MCF 10A (cell line): ENCODE measurements at regions of chr1 and their contacts with region 1.

Region 1: DNA sequence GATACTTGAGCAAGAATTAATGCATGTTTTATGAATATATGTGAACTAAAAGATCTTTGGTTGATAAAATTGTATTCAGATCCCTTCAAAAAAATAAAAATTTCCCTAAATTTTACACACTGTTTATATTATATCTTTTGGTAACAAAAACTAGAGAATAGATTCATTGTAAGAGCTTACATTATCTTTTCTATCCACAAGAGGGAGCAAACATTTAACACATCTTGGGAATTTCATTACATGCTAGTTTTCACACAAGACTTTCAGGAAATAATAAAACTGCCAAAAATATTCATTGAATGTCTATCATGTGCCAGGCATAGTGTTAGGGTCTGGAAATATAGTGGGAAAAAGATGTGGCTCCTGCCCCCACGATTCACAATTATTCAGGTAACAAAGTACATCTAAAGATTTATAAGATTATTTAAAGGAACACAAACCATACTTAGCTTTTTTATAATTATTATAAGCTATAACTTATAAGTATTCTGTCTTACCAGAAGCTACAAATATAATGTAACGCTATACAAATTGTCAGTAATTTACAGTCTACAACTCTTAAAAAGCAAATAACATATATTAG is 30.6 kb downstream of the FAF1 start:
- DNase-seq: peak; percentile 37
- H3K4me3 Mint-ChIP-seq: no peak overlapping the region
- H3K27ac Mint-ChIP-seq: no peak overlapping the region
- H3K4me1 Mint-ChIP-seq: no peaks in the 10 kb centered on the region
- H3K27me3 Mint-ChIP-seq: no peaks in the 10 kb centered on the region
- CTCF ChIP-seq: peak; percentile 40

Region 2: DNA sequence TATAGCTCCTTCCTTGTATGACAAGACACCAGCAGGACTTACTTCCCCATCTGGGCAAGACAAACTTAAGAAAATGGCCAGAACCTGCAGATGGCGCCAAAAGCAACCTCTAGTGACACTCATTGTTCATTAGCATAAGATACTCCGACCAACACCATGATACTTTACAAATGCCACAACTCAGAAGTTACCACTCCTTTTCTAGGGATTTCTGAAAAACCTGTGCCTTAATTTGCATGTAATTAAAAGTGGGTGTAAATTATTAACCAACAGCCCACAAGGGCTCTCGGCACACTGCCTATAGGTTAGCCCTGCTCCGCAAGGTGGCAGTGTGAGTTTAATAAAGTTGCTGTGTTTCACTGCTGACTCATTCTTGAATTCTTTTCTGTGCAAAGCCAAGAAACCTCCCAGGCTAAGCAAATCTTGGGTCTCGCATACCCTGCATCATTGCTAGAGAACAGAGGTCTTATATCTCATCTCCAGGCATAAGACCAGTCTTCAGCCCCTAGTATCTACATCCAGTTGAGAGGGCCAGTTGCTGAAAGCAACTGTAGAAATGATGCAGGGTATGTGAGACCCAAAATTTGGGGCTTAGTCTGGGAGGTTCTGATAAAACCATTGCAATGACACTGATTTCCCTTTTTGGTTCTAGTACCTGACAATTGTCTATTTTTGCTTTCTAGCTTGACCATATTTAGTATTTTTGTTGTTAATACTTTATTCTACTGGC is 55.8 kb before region 1 on chr1:
- CTCF ChIA-PET with region 1: interaction called, 12 read pairs
- POLR2A ChIA-PET with region 1: no interaction called
- intact Hi-C with region 1: no loop called
- DNase-seq: peak; percentile 84
- H3K4me3 Mint-ChIP-seq: peak overlapping the region; percentile 67
- H3K27ac Mint-ChIP-seq: peak overlapping the region; percentile 27
- H3K4me1 Mint-ChIP-seq: no peaks in the 10 kb centered on the region
- H3K27me3 Mint-ChIP-seq: no peaks in the 10 kb centered on the region
- CTCF ChIP-seq: peak; percentile 78

Region 3: DNA sequence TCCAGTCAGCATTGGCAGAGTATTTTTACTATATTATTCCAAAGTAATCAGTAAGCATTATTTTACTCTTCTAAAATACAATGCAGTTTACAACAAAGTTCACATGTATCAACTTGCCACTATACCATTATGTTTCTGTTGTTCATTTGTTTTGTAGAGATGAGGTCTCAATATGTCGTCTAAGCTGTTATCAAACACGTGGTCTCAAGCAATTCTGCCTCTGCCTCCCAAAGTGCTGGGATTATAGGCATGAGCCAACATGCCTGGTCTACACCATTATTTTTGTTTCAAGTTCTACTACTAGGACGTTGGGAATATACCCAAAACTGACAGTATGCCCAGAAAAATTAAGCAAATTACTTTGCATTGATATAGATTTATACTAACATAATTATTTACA is 10.8 kb after region 1 on chr1:
- CTCF ChIA-PET with region 1: interaction called, 23 read pairs
- POLR2A ChIA-PET with region 1: no interaction called
- intact Hi-C with region 1: no loop called
- DNase-seq: no peak
- H3K4me3 Mint-ChIP-seq: no peak overlapping the region
- H3K27ac Mint-ChIP-seq: no peak overlapping the region
- H3K4me1 Mint-ChIP-seq: peaks cover 11% of the 10 kb centered on the region
- H3K27me3 Mint-ChIP-seq: no peaks in the 10 kb centered on the region
- CTCF ChIP-seq: no peak

Region 4: DNA sequence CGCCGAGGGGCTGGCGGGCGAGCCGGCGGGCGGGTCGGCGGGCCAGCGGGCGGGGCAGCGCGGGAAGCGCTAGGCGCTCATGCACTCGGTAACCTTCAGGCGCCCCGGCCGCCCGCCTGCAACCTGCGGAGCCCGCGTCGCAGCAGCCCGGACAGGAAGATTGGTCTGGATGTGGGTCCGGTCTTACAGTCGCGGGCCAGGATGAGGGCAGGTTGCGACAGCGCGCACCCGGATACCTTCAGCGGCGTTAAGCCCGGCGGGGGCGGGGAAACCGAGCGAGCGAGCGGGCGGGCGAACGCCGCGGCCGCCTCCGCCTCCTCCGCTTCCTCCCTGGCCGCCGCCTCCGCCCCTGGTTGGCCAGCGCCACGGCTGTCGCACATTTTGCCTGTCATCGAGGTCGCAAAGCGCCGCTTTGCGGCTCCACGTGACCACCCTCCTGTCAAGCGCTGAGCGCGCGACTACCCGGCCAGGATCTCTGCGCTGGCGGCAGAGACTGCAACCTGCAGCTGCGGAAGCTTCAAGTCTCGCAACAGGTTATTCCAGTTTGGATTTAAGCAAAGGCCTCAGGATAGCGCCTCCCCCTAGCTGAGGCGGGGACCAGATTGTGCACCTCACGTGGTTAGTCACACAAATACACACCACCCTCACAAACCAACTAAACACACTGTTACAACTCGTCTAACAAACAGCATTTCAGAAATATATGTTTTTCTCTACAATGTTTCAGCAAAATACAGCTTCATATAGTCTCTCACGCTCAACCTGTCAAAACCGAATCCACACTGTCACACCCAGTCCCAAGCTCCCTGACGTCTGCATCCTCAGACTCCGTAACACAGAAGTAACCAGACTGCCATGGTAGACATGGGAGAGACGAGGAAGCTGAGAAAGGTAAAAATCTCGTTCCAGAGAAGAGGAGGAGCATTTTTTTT is 30.7 kb after region 1 on chr1 and contains the start of gene FAF1:
- CTCF ChIA-PET with region 1: interaction called, 22 read pairs
- POLR2A ChIA-PET with region 1: interaction called, 5 read pairs
- intact Hi-C with region 1: loop called (anchors 5 kb)
- DNase-seq: peak; percentile 96
- H3K4me3 Mint-ChIP-seq: peak within 1 kb of the TSS; percentile 76
- H3K27ac Mint-ChIP-seq: peak within 1 kb of the TSS; percentile 1
- H3K4me1 Mint-ChIP-seq: peaks cover 11% of the 10 kb centered on the region
- H3K27me3 Mint-ChIP-seq: no peaks in the 10 kb centered on the region
- CTCF ChIP-seq: no peak
- total RNA-seq, gene FAF1: 74.4 and 93.2 TPM in 2 replicates

Region 5: DNA sequence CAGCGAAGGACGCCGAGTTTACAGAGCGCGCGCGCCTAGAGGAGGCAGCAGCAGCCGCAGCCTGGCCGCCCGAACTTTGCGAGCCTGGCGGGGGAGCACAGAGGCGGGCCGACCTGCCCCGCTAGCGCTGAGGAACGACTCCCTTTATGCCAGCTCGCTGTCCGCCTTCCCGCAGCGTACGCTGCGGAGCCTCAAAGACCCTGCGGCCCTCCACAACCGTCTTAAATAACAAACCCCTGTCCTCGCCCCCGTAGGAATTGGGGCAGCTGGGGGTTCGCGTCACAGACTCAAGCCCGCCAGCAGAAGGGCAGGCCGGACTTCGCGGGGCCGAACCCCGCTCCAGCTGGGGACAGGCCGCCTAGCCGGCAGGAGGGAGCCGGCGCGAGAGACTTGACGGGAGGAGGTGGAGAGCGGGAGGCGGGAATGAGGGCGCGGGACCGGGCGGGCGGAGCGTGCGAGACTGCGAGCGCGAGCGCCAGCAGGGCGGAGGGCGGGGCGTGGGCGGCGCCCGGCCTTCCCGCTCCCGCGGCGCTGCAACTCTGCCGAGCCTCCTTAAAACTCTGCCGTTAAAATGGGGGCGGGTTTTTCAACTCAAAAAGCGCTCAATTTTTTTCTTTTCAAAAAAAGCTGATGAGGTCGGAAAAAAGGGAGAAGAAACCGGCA is 38.8 kb after region 1 on chr1:
- CTCF ChIA-PET with region 1: interaction called, 22 read pairs
- POLR2A ChIA-PET with region 1: interaction called, 8 read pairs
- intact Hi-C with region 1: loop called (anchors 5 kb)
- DNase-seq: peak; percentile 91
- H3K4me3 Mint-ChIP-seq: peak overlapping the region; percentile 86
- H3K27ac Mint-ChIP-seq: peak overlapping the region; percentile 95
- H3K4me1 Mint-ChIP-seq: peaks cover 8% of the 10 kb centered on the region
- H3K27me3 Mint-ChIP-seq: no peaks in the 10 kb centered on the region
- CTCF ChIP-seq: peak; percentile 42

Region 6: DNA sequence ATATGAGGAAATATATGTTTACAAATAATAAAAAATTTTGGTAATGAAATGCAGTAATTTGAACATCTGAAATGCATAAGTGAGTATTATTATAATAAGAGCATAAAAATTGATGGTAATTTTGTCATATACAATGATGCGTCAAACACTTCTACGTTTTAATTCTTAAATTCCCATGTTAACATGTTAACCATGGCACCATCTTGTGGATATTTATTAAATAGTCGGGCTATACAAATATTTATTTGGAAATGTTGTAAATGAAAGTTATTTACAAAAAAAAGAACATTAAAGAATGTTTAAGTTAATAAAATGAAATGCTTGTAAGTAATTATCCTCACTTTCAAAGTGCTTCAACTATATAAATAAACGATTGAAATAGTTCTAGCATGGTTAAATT is 115.4 kb after region 1 on chr1:
- CTCF ChIA-PET with region 1: interaction called, 13 read pairs
- POLR2A ChIA-PET with region 1: no interaction called
- intact Hi-C with region 1: loop called (anchors 1 kb)
- DNase-seq: peak; percentile 12
- H3K4me3 Mint-ChIP-seq: no peak overlapping the region
- H3K27ac Mint-ChIP-seq: no peak overlapping the region
- H3K4me1 Mint-ChIP-seq: no peaks in the 10 kb centered on the region
- H3K27me3 Mint-ChIP-seq: no peaks in the 10 kb centered on the region
- CTCF ChIP-seq: peak; percentile 18

Region 7: GRCh38 chr1:51139474-51139873 is 210.0 kb after region 1 on chr1:
- CTCF ChIA-PET with region 1: interaction called, 3 read pairs
- POLR2A ChIA-PET with region 1: no interaction called
- intact Hi-C with region 1: loop called (anchors 1 kb)
- DNase-seq: no peak
- H3K4me3 Mint-ChIP-seq: peak overlapping the region; percentile 18
- H3K27ac Mint-ChIP-seq: no peak overlapping the region
- H3K4me1 Mint-ChIP-seq: no peaks in the 10 kb centered on the region
- H3K27me3 Mint-ChIP-seq: no peaks in the 10 kb centered on the region
- CTCF ChIP-seq: peak; percentile 15

Region 8: DNA sequence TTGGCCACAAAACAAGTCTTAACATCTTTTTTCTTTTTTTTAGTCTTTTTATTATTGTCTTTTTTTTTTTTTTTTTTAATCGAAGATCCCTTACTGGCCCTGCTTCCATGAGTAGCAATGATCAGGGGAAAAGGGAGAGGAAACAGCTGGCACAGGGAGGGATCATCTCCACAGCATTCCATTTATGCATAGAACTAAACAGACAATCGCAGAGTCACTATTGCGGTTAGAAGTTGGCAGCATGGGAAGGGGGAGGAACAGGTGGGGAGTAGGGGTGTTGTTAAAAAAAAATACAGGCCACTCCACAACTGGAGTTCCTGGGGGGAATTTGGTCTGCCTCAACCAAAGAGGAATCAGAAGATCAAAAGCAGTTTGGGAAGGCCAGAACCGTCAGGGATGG is 227.9 kb after region 1 on chr1:
- CTCF ChIA-PET with region 1: no interaction called
- POLR2A ChIA-PET with region 1: no interaction called
- intact Hi-C with region 1: no loop called
- DNase-seq: no peak
- H3K4me3 Mint-ChIP-seq: no peak overlapping the region
- H3K27ac Mint-ChIP-seq: no peak overlapping the region
- H3K4me1 Mint-ChIP-seq: no peaks in the 10 kb centered on the region
- H3K27me3 Mint-ChIP-seq: no peaks in the 10 kb centered on the region
- CTCF ChIP-seq: no peak

Region 9: DNA sequence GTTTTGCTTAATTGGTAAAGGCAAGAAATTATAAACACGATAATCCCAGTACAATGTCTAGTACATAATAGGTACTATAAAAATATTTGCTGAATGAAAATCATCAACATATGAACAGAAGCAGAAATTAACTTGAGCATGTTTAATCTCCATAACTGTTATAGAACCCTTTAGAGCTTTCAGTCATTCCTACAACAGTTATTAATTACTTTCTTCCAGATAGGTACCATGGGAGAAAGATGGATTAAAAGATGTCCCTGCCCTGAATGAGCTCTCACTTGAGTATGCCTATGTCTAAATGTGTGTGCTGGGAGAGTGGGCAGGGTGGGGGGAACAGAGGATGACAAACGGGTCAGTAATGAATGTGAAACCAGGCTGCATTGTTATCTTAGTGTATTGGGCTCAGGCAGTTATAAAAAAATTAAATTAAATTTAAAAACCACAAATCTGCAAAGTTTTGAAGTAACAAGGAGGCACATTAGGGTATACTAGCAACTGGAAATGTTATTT is 587.2 kb after region 1 on chr1:
- CTCF ChIA-PET with region 1: no interaction called
- POLR2A ChIA-PET with region 1: no interaction called
- intact Hi-C with region 1: no loop called
- DNase-seq: no peak
- H3K4me3 Mint-ChIP-seq: peak overlapping the region; percentile 79
- H3K27ac Mint-ChIP-seq: peak overlapping the region; percentile 93
- H3K4me1 Mint-ChIP-seq: peaks cover 18% of the 10 kb centered on the region
- H3K27me3 Mint-ChIP-seq: no peaks in the 10 kb centered on the region
- CTCF ChIP-seq: no peak